CD4-positive, alpha-beta T cell (primary cell): ENCODE measurements at regions of chr17 and their contacts with region 1.

Region 1: DNA sequence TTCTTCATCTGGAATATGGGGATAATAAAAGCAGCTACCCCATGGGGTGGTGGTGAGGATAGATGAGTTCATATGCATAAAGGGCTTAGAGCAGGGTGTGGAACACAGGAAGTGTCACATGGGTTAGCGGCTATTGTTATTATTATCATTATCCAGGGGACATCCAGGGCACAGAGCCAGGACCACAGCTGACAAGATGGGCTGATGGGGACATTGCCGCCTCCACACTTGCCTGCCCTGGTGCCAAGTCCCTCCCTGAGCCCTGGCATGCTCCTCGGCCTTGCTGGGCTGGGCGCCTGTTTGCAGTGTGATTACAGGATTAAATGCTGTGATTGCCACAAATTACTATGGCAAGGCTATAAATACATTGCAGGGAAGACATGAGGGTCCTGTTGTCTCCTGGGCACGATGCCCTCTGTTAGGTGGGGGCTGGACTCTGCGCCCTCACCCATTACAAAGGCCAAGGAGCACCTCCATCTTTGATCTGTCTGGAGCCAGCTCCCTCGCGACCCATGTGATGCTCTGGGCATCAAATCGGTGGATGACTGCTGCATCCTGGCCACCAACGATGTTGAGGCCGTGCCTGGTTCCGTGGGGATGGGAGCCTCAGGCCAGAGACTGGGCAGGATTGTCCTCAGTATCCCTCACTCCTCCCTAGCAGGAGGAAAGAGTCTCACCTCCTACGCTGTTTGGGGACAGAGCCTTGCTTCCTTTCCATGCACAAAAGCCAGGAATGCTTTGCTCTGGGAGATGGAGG is 43.2 kb downstream of the PIMREG start:
- DNase-seq: no peak
- ATAC-seq: no peak
- H3K4me3 ChIP-seq: no peak overlapping the region
- H3K4me3 Mint-ChIP-seq: no peak overlapping the region
- H3K27ac ChIP-seq: no peak overlapping the region
- H3K27ac Mint-ChIP-seq: no peak overlapping the region
- H3K4me1 ChIP-seq: no peaks in the 10 kb centered on the region
- H3K4me1 Mint-ChIP-seq: no peaks in the 10 kb centered on the region
- H3K27me3 ChIP-seq: peaks cover 0 to 5% of the 10 kb centered on the region in 2 experiments
- H3K27me3 Mint-ChIP-seq: no peaks in the 10 kb centered on the region
- CTCF ChIP-seq: no peak

Region 2: GRCh38 chr17:6567529-6568183 is 80.2 kb after region 1 on chr17:
- CTCF ChIA-PET with region 1: no interaction called
- POLR2A ChIA-PET with region 1: no interaction called
- intact Hi-C with region 1: no loop called
- DNase-seq: no peak
- ATAC-seq: no peak
- H3K4me3 ChIP-seq: no peak overlapping the region
- H3K4me3 Mint-ChIP-seq: no peak overlapping the region
- H3K27ac ChIP-seq: no peak overlapping the region
- H3K27ac Mint-ChIP-seq: no peak overlapping the region
- H3K4me1 ChIP-seq: no peaks in the 10 kb centered on the region
- H3K4me1 Mint-ChIP-seq: no peaks in the 10 kb centered on the region
- H3K27me3 ChIP-seq: peaks cover 3 to 7% of the 10 kb centered on the region in 2 experiments
- H3K27me3 Mint-ChIP-seq: peaks cover 20% of the 10 kb centered on the region
- CTCF ChIP-seq: no peak

Region 3: GRCh38 chr17:6721744-6722143 is 234.3 kb after region 1 on chr17:
- CTCF ChIA-PET with region 1: no interaction called
- POLR2A ChIA-PET with region 1: no interaction called
- intact Hi-C with region 1: loop called in 1 of 2 experiments (anchors 10 kb)
- DNase-seq: no peak
- ATAC-seq: no peak
- H3K4me3 ChIP-seq: no peak overlapping the region
- H3K4me3 Mint-ChIP-seq: no peak overlapping the region
- H3K27ac ChIP-seq: no peak overlapping the region
- H3K27ac Mint-ChIP-seq: no peak overlapping the region
- H3K4me1 ChIP-seq: no peaks in the 10 kb centered on the region
- H3K4me1 Mint-ChIP-seq: no peaks in the 10 kb centered on the region
- H3K27me3 ChIP-seq: peaks cover 10 to 12% of the 10 kb centered on the region in 2 experiments
- H3K27me3 Mint-ChIP-seq: peaks cover 79% of the 10 kb centered on the region
- CTCF ChIP-seq: no peak

Region 4: DNA sequence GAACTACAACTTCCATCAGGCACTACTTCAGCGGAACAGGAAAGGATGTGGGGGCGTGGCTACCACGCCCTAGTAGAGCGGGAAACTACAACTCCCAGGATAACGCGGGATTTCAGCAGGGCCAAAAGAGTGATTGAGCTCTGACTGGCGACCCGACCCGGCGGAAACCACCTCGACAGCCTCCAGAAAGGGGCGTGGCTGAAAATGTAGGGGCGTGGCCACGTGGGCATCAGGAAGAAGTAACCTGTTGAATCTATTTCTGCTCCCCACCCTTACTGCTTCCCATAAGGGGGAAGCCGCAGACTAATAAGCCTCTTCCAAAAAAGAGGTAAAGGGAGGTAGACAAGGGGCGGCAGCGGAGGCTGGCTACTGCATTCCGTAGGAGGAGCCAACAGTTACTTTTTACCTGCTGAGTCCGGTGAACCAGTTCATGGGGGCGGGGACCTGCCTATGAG is 947.8 kb after region 1 on chr17 and contains the start of gene TMEM102:
- CTCF ChIA-PET with region 1: no interaction called
- POLR2A ChIA-PET with region 1: no interaction called
- intact Hi-C with region 1: no loop called
- DNase-seq: peak; percentile 96 to 100 (median 98)
- ATAC-seq: peak; percentile 82
- H3K4me3 ChIP-seq: peak within 1 kb of the TSS; percentile 86
- H3K4me3 Mint-ChIP-seq: peak within 1 kb of the TSS; percentile 87
- H3K27ac ChIP-seq: peak within 1 kb of the TSS; percentile 83 to 93
- H3K27ac Mint-ChIP-seq: peak within 1 kb of the TSS; percentile 87
- H3K4me1 ChIP-seq: peaks cover 51% of the 10 kb centered on the region
- H3K4me1 Mint-ChIP-seq: peaks cover 41% of the 10 kb centered on the region
- H3K27me3 ChIP-seq: peaks cover 16 to 21% of the 10 kb centered on the region in 2 experiments
- H3K27me3 Mint-ChIP-seq: peaks cover 16% of the 10 kb centered on the region
- CTCF ChIP-seq: no peak
- total RNA-seq, gene TMEM102: 6.8 to 7.1 TPM